ENCODE measurements at regions of chr12 and their contacts with region 1.

Region 1: GRCh38 chr12:28172434-28173030 is 17.7 kb upstream of the CCDC91 start:
- DNase-seq: peak; percentile 71
- H3K27ac ChIP-seq: no peak overlapping the region
- CTCF ChIP-seq: peak; percentile 54

Region 2: DNA sequence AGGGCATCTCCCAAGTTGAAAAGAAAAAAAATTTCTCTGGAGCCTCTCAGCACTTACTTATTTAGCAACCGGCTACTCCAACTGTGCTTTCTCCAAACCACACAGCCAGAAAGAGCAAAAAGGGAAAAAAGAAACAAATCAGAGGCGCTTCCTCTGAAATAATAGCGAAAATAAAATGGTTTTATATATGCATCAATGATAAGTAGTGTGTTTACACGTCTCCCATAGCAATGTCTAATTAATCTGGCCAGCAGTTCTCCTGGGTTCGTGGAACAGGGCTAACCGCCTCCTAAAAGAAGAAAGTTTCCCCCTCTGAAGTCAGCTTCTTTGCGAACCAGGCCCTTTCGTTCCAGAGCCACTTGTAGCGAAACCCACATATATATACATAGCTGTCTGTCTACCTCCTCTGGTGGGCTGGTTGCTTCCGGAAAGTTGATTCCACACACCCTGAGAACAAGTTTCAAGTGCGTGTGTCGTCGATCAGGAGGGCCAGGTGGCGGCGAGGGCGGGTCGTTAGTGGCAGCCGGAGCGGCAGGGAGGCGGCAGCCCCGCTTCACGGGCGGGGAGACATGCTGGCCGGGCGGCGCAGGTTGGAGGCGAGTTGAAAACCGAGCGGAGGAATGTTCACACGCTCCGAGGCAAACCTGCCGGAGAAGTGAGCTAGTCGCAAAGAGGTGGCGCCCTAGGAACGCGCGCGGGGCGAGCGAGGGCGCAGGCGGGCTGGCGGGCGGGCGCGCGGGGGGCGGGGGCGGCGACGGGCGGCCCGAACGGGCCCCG is 202.7 kb before region 1 on chr12:
- CTCF ChIA-PET with region 1: interaction called, 11 read pairs
- POLR2A ChIA-PET with region 1: no interaction called
- DNase-seq: peak; percentile 44
- H3K27ac ChIP-seq: peak overlapping the region; percentile 90
- CTCF ChIP-seq: peak; percentile 29

Measured in RWPE1 (cell line).